ENCODE measurements at regions of chr3 and their contacts with region 1.

Region 1: DNA sequence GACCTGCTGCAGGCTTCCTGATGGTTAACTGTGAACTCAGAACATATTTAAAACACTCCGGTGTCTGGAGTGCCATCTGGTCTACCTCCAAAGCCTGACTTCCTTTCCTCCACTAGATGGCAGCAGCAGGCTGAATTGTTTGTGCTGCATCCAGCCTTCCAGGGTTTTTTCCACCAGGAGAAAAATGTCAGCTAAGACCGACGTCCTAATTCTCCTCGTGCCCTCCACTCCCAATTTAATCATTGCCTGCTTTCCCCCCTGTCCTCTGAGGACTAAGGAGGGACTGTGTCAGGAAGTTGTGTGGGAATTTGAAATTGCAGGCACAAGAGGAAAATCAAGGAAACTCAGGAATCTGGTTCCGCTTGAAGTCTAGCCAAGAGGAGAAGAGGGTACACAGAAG is 165.2 kb upstream of the UMPS start:
- DNase-seq: peak; percentile 49 to 94 (median 78)

Region 2: DNA sequence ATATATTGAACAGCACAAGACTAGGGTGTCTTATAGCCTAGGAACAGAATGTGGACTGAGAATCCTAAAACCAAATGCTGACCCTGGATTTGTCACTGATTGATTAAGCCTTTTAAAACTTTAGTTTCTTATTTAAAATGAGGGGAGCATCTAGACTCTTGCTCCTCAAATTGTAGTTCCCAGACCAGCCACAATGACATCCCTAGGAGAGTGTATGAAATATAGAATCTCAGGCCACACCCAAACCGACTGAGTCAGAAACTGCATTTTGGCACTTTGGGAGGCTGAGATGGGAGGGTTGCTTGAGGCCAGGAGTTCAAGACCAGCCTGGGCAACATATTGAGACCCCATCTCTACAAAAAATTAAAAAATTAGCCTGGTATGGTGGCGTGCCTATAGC is 122.5 kb before region 1 on chr3:
- intact Hi-C with region 1: no loop called
- DNase-seq: no peak

Region 3: GRCh38 chr3:124627501-124627908 is 62.5 kb after region 1 on chr3:
- intact Hi-C with region 1: no loop called
- DNase-seq: no peak

Region 4: DNA sequence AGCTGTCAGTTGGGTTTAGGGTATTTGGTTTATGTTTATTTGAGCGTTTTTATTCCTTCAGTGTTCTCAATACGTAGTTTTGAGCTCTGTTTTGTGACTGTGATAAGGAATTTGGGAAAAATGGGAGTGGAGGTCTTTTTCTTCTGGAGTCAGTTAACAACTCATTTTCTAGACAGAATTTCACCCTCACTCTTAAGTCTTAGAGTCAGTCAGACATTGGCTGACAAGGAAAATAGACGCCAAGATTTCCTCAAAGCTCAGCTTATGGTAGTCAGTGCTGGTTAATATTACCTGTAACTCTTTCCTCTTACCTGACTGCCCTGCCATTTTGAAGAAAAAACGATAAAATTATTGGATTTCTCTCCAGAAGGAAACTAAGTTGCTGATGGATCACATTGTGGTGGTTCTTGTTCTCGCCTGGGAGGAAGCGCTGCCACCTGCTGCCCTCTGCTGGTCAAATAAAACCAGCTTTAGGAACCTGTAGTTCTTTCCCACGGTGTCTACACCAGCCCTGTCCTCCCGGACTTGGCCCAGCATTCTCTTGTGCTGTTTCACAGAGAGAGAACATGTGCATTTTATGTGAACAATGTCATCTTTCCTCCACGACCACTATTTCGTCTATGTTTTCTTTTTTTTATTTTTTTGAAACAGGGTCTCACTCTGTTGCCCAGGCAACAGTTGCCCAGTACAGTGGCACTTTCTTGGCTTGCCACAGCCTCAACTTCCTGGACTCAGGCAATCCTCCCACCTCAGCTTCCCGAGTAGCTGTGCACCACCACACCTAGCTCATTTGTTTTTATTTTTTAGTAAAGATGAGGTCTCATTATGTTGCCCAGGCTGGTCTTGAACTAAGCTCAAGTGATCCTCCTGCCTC is 123.8 kb after region 1 on chr3:
- intact Hi-C with region 1: loop called (anchors 1 kb)
- DNase-seq: peak; percentile 33 to 94 (median 74)

Region 5: GRCh38 chr3:124722589-124722988 is 157.6 kb after region 1 on chr3:
- intact Hi-C with region 1: no loop called
- DNase-seq: no peak

Region 6: DNA sequence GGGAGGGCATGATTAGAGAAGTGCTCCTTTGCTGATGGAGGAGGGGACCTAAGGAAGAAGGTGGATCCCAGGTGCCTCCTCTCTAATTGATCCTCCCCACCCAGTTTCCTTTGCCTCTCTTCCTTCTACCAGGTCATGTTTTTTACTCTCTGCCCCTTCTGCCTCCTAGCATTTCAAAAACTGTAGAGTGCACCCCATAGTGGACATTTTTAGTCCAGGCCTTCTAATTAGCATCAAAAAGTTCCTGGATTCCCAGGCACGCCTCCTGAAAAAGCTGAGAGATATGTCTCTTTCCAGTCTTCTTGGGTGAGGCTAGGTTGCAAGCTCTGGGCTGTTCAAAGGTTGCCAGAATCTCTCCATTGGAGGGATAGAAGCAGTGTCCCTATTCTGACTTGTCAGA is 340.8 kb after region 1 on chr3:
- intact Hi-C with region 1: loop called (anchors 2 kb)
- DNase-seq: no peak

Region 7: DNA sequence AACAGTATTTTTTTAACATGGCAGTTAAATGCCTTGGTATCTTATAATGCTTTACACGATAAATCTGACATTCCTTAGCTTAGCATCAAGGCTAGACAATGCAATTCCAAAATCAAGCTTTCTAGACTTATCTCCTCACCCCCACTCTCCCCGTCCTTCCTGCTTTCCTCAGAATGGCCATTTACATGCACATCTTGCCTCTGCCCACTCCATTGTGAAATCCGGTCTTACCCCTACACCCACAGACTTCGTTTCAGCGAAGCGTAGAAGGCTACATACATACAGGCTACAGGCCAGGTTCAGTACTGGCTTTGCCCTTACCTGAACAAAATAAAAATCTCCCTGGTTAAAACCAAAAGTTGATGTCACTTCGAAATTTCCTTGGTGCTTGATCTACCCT is 706.1 kb after region 1 on chr3:
- intact Hi-C with region 1: no loop called
- DNase-seq: no peak